Left ventricle myocardium superior (tissue), 1 donor: ENCODE measurements at regions of chr10 and their contacts with region 1.

Region 1: DNA sequence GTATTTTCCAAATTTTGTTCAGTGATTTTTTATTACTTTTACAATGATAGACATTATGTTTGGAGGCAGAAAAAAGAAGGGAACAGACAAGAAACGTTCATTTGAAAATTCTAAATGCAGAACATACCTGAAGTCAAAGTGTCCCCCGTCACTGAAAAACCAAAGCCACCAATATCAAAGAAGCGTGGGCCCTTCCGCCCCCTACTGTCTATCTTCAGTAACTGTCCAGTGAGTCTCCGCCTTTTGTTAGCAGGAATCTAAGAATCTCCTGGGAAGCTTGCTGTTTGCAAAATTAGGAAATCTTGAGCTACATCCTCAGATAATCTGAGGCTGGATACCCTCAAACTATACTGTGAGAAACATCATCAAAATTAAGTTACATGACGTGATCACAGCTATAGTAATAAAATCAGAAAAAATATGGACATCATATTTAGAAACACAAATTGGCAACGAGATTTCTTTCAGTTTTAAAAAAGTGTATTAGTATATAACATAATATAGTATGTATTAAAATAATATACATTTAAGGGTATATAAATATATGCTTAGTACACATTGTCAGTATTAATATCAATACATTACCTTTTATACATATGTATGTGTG is 169.3 kb upstream of the AKR1E2 start:
- DNase-seq: peak; percentile 44
- ATAC-seq: peak; percentile 62

Region 2: DNA sequence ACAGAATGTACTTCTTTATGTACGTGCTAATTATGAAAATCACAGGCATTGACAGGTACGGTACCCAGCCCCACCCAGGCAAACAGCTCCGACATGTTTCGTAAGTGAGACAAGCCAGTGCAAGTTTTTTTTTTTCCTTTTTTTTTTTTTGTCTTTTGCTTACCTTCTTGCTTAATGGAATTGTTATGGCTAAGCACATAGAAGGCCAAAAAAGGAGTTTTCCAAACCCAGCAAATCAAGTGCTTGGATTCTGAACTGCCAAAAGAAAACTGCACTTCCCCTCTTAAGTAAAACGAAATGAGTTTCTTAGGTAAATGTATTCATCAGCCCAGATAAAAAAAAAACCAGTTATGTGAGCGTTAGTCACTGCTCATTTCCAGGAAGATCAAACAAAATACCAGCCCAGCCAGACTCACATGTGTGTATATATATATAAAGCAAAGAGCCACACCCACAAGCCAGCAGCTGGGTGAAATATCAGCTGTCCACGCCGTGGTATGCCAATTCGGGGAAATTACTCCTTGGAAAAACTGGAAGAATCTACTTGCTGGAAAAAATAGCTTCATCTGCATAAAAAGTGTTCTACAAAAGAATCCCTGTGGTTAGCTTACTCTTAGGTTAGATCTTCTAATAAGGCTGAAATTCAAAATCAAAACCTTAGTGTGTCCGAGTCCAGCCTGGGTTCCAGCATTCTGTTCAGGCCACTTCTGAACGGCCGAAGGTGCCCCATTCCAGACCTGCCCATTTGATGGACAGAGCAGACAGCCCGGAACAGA is 879.7 kb before region 1 on chr10:
- intact Hi-C with region 1: loop called (anchors 10 kb)
- DNase-seq: no peak
- ATAC-seq: peak; percentile 11

Region 3: DNA sequence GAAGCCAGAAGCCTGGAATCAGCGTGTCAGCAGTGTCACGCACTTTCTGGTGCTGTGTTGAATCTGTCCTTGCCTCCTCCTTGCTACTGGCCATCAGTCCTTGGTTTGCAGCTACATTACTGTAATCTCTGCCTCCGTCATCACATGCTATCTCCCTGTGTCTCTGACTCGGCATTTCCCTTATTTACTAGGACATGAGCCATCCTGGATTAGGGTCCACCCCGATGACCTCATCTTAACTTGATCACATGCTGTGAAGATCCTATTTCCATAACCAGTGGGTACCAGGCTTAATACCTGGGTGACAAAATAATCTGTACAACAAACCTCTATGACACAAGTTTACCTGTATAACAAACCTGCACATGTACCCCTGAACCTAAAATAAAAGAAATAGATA is 353.6 kb before region 1 on chr10:
- intact Hi-C with region 1: no loop called
- DNase-seq: no peak
- ATAC-seq: no peak

Region 4: GRCh38 chr10:4512671-4513240 is 143.9 kb before region 1 on chr10:
- intact Hi-C with region 1: loop called (anchors 10 kb)
- DNase-seq: peak; percentile 66
- ATAC-seq: peak; percentile 81